Spleen (tissue), 13 donors: ENCODE measurements at regions of chr12 and their contacts with region 1.

Region 1: GRCh38 chr12:107131832-107132616 is 38.7 kb upstream of the CRY1 start:
- DNase-seq: no peak
- H3K4me3 ChIP-seq: no peak overlapping the region
- H3K27ac ChIP-seq: no peak overlapping the region
- H3K4me1 ChIP-seq: no peaks in the 10 kb centered on the region
- H3K27me3 ChIP-seq: no peaks in the 10 kb centered on the region
- CTCF ChIP-seq: peak; percentile 47 to 75 (median 67)
- POLR2A ChIP-seq: no peak

Region 2: DNA sequence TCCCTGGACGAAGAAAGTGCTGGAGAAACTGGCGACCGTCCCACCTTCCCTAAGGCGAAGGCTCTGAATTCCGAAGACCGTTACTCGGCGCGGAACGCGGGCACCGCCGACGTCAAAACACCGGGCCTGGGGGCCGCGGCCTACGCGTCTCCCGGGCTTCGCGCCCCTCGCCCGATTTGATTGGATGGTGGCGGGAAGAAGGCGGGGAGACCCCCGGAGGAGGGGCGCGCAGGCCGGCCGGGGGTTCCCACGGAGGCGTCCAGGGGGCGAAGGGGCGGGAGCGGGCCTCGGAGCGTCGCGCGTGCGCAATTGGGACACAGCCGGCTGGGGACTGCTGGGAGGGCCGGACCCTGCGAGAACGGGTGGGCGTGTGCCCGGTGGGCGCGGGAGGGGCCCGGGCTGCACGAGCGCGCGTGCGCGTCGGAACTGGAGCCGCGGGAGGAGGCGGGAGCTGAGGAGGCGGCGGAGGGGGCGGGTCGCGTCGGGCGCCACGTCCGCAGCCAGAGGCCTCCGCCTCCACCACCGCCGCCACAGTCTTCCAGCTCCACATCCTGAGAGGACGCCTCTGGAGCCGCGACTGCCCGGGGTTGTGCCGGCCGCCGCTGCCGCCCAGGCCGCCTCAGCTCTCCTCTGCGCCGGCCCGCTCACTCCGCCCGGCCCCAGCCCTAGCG is 176.5 kb before region 1 on chr12 and contains the start of gene TMEM263:
- intact Hi-C with region 1: no loop called
- DNase-seq: peak; percentile 97
- H3K4me3 ChIP-seq: peak within 1 kb of the TSS; percentile 72 to 97 (median 88)
- H3K27ac ChIP-seq: peak within 1 kb of the TSS; percentile 86 to 97 (median 95)
- H3K4me1 ChIP-seq: peaks cover 10 to 58% (median 30%) of the 10 kb centered on the region in 6 donors
- H3K27me3 ChIP-seq: no peaks in the 10 kb centered on the region
- CTCF ChIP-seq: peak in 2 of 11 experiments; percentile 9 to 30
- POLR2A ChIP-seq: peak in 2 of 3 donors; percentile 16 to 89
- total RNA-seq, gene TMEM263: 26.7 to 38.1 (median 33.0) TPM

Region 3: DNA sequence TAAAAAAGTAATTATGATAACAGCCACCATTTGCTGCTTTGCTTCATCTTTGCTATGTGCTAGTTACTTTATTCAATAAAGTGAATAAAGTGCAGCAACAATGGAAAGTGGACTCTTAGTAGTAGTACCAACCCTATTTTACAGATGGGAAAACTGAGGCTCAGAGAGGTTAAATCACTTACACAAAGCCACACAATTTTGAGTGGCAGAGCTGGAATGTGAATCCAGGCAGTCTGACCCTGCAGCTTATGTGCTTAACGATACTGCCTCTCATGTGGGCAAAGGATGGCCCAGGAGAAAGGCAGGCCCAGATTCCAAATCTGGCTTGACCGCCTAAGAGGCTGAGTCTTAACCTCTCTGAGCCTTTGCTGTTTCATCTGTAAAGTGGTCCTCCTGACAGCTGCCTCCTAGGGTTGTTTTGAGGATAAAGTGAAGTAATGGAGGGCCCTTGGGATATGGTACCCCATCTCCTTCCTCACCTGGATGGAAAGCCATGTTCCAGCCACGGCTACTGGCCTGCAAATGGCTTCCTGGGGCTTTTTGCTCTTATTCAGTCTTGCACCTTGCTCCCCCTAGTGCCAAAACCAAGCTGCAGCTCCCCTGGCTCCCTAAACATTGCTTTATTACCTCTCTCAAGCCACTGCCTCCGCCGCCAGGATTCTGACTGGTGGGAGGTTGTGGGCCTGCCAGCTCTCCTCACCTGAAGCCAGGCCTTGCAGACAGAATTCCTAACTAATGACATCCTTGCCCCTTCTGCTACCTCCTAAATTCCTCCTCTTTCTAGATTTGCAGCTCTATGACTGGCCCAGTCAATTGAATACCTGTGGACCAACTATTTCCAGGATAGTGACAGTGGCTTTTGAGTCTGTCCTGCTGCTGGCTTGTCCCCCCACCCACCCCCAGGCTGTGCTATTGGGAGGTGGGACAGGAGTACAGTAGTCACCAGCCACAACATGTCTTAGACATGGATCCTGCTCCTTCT is 270.3 kb after region 1 on chr12:
- intact Hi-C with region 1: loop called (anchors 5 kb)
- DNase-seq: no peak
- H3K4me3 ChIP-seq: no peak overlapping the region
- H3K27ac ChIP-seq: no peak overlapping the region
- H3K4me1 ChIP-seq: peaks cover 0 to 10% (median 4%) of the 10 kb centered on the region in 6 donors
- H3K27me3 ChIP-seq: no peaks in the 10 kb centered on the region
- CTCF ChIP-seq: peak in 8 of 11 experiments; percentile 39 to 69 (median 52)
- POLR2A ChIP-seq: no peak

Region 4: DNA sequence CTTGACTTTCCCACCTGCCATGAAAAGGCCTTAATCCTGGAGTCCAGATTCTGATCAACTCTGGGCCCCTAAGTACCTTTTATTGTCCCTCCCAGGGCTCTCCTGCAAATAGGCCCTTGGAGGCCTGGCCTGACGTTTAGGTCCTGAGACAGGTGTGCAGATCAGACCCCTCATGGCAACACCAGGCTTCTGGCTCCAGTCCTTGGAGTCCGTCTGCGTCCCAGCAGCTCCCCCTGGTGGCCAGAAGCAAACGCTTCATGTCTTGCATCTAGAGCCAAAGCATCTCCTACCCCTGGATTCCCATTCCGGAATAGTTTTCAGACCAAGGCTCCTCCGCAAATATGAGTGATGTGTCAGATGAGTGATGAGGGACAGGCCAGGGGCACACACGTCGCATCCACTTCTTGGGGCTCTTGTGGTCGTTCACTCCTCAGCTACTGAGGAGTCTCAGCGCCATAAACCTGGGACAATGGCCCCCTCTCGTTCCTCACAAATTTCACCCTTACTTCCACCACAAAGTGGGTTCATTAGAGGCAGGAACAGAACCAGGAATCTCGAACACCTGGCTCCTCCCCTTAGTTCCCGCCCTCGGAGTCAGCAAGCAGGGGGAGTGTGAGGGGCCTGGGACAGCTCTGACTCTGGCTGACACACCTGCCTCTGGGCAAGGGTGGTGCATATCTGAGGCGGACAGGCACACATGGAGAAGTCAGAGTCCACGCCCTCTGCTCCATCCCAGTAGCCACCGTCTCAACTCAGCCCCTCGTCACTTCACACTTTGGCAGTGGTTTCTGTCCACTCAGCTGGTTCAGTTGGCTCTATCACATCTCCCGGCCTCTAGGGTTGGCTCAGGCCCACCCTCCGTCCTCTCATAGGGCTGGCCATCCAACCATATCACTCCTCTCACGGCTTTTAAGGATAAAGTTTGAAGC is 475.7 kb after region 1 on chr12:
- intact Hi-C with region 1: loop called (anchors 2 kb)
- DNase-seq: peak; percentile 94
- H3K4me3 ChIP-seq: no peak overlapping the region
- H3K27ac ChIP-seq: no peak overlapping the region
- H3K4me1 ChIP-seq: no peaks in the 10 kb centered on the region
- H3K27me3 ChIP-seq: peaks cover 0 to 3% (median 0%) of the 10 kb centered on the region in 7 donors
- CTCF ChIP-seq: peak; percentile 60 to 92 (median 82)
- POLR2A ChIP-seq: no peak